ENCODE measurements at regions of chr7 and their contacts with region 1.

Region 1: GRCh38 chr7:3955751-3956696 is 655.0 kb downstream of the SDK1 start:
- DNase-seq: no peak
- ATAC-seq: peak; percentile 88
- H3K4me3 Mint-ChIP-seq: peak overlapping the region; percentile 39
- H3K27ac Mint-ChIP-seq: peak overlapping the region; percentile 60
- H3K4me1 Mint-ChIP-seq: peaks cover 35% of the 10 kb centered on the region
- H3K27me3 Mint-ChIP-seq: no peaks in the 10 kb centered on the region
- CTCF ChIP-seq: no peak

Region 2: DNA sequence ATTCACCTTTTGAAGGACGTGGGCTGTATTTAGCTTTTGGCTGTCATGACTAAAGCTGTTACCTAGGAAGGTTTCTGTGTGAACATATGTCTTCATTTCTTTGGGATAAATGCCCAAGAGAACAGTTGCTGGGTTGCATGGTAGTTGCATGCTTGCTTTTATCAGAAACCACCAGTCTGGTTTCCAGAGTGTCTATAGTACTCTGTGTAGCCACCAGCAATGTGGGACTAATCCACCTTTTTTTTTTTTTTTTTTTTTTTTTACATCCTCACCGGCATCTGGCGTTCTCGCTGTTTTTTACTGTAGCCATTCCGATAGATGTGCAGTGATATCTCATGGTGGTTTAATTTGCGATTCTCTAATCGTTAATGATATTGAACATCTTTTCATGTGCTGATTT is 357.2 kb before region 1 on chr7:
- CTCF ChIA-PET with region 1: no interaction called
- POLR2A ChIA-PET with region 1: no interaction called
- intact Hi-C with region 1: loop called (anchors 5 kb)
- DNase-seq: no peak
- ATAC-seq: no peak
- H3K4me3 Mint-ChIP-seq: no peak overlapping the region
- H3K27ac Mint-ChIP-seq: no peak overlapping the region
- H3K4me1 Mint-ChIP-seq: peaks cover 39% of the 10 kb centered on the region
- H3K27me3 Mint-ChIP-seq: no peaks in the 10 kb centered on the region
- CTCF ChIP-seq: no peak

Region 3: DNA sequence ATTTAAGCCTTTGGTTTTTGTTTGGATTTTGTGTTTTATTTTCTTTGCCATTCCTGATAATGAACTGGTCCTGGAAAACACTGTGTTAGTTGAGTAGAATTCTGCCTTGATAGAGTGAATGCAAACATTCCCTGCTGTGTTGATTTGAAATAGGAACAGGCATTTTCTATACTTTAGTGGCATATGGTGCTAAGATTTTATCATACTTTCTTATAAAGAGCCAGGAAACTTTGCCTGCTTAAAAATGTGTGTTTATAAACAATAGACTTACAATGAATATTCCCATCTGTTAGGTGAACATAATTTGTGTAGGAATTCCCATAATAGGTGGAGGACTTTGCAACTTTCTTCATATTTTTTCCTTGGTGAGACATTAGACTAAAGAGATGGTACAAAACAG is 321.6 kb before region 1 on chr7:
- CTCF ChIA-PET with region 1: no interaction called
- POLR2A ChIA-PET with region 1: no interaction called
- intact Hi-C with region 1: no loop called
- DNase-seq: no peak
- ATAC-seq: no peak
- H3K4me3 Mint-ChIP-seq: no peak overlapping the region
- H3K27ac Mint-ChIP-seq: no peak overlapping the region
- H3K4me1 Mint-ChIP-seq: no peaks in the 10 kb centered on the region
- H3K27me3 Mint-ChIP-seq: peaks cover 7% of the 10 kb centered on the region
- CTCF ChIP-seq: no peak

Region 4: GRCh38 chr7:3914051-3914775 is 41.8 kb before region 1 on chr7:
- CTCF ChIA-PET with region 1: no interaction called
- POLR2A ChIA-PET with region 1: interaction called, 3 read pairs
- intact Hi-C with region 1: loop called (anchors 2 kb)
- DNase-seq: no peak
- ATAC-seq: no peak
- H3K4me3 Mint-ChIP-seq: no peak overlapping the region
- H3K27ac Mint-ChIP-seq: no peak overlapping the region
- H3K4me1 Mint-ChIP-seq: peaks cover 20% of the 10 kb centered on the region
- H3K27me3 Mint-ChIP-seq: peaks cover 4% of the 10 kb centered on the region
- CTCF ChIP-seq: no peak